ENCODE measurements at regions of chr7 and their contacts with region 1.

Region 1: GRCh38 chr7:27921081-27921836 is 181.3 kb downstream of the TAX1BP1 start:
- DNase-seq: peak; percentile 66 to 82
- H3K4me3 ChIP-seq: no peak overlapping the region
- H3K27ac ChIP-seq: 0 out of 2 replicates have a peak overlapping the region, but pooled peaks have one; percentile 1
- H3K4me1 ChIP-seq: peaks cover 33% of the 10 kb centered on the region
- H3K27me3 ChIP-seq: no peaks in the 10 kb centered on the region
- CTCF ChIP-seq: peak; percentile 91

Region 2: DNA sequence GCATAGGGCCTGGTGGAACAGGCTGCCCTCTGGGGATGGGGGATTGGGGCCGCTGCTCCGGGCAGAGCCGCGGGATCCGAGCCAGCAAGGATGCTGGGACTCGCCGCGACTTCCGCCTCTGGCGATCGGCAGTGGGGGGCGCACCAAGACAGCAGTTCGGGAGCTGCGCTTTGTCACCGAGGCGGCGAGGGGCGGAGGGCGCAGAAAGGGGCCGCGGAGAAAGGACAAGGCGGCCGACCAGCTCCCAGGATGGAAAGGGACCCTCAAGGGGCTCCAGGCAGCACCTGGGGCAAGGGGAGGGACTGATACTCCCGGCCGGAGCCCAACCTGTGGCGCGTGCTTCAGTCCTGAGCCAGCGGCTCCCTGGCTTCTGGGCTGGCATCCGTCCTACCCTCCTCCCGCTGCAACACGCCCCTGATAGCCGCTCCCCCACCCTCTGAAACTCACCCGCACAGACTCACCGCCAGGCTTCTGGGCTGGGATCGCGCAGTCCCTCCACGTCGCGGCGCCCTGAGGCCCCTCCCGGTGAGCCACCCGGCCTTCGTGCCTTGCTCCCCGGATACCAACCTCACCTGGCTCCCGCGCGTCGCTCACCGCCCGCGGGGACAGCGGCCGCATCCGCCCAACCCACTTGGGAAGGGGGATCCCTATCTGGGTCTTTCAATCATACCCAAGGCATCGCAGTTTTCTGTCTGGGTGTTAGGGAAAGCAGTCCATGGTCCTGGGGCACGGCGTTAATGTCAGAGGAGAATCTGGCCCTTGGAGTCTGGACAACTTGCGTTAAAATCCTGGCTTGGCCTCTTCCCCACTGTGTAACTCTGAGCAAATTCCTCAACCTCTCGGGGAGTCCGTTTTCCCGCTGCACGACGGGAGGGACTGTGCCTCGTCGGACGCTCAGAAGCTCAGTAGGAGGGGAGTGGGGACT is 685.6 kb before region 1 on chr7:
- CTCF ChIA-PET with region 1: no interaction called
- POLR2A ChIA-PET with region 1: no interaction called
- intact Hi-C with region 1: loop called (anchors 1 kb)
- DNase-seq: peak; percentile 44 to 74
- H3K4me3 ChIP-seq: peak overlapping the region; percentile 64
- H3K27ac ChIP-seq: no peak overlapping the region
- H3K4me1 ChIP-seq: no peaks in the 10 kb centered on the region
- H3K27me3 ChIP-seq: peaks cover 8% of the 10 kb centered on the region; the same call in 1 of the 2 replicates
- CTCF ChIP-seq: peak; percentile 75

Region 3: DNA sequence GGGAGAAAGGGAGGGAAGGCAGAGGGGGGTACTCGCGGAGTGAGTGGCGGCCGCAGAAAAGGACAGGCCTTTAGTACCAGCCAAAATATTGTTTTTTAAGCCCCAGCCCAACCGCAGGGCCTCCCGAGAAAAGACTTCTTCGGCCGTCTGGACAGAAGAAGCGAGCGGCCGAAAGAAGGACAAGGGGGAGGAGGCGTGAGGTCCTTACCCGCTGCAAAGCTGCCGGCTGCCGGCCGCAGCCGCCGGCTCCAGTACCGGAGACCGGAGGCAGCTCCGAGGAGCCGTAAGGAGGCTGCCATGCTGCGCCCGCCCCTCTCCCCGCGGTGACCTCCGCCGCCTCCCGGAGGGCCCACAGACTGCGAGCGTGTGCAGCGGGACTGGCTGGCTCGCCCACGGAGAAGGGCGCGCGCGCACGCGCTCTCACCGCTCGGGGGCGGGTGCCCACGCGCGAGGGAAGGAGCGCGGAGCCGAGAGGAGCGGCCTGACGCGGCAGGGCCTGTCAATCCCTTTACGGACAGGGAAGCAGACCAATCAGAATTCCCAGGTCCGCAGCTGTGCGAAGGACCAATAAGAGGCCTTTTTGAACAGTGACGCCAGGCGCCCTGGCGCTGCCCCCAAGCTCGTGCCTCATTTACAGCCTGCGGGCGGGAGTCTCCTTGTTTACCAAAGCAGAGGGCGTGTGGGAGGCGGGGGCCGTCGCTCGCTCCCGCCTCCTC is 258.6 kb before region 1 on chr7 and contains the start of gene HIBADH:
- CTCF ChIA-PET with region 1: interaction called, 3 read pairs
- POLR2A ChIA-PET with region 1: no interaction called
- intact Hi-C with region 1: loop called (anchors 10 kb)
- DNase-seq: peak; percentile 99
- H3K4me3 ChIP-seq: peak within 1 kb of the TSS; percentile 79
- H3K27ac ChIP-seq: peak within 1 kb of the TSS; percentile 64
- H3K4me1 ChIP-seq: peaks cover 22% of the 10 kb centered on the region
- H3K27me3 ChIP-seq: no peaks in the 10 kb centered on the region
- CTCF ChIP-seq: no peak; the same call in 1 of the 2 replicates
- total RNA-seq, gene HIBADH: 72.4 and 73.9 TPM in 2 replicates

Region 4: DNA sequence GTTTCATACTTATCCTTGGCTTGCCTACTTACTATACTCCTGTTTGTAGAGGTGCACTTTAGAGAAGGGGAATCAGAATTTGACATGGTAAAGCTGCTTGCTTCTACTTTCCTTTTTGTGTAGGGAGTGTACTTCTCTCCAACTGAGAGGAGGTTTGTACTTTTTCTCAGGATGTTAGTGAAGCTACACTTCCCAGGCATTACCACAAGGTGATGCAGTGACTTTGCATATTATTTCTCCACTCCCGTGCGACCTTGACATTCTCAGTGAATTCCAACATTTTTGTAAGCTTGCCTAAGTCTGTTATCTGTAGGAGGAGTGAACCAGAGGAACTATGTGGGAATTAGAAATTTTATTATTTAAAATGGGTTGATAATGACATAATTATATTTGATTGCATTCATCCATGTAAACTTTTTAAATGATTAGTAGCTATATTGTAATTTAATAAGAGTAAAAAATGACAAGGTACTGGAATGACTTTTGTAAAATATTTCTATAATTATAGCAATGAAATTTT is 176.1 kb before region 1 on chr7:
- CTCF ChIA-PET with region 1: interaction called, 6 read pairs
- POLR2A ChIA-PET with region 1: interaction called, 18 read pairs
- intact Hi-C with region 1: loop called (anchors 1 kb)
- DNase-seq: peak; percentile 47 to 82
- H3K4me3 ChIP-seq: peak overlapping the region; percentile 25
- H3K27ac ChIP-seq: peak overlapping the region; percentile 65
- H3K4me1 ChIP-seq: peaks cover 42% of the 10 kb centered on the region
- H3K27me3 ChIP-seq: no peaks in the 10 kb centered on the region
- CTCF ChIP-seq: peak; percentile 81

Region 5: DNA sequence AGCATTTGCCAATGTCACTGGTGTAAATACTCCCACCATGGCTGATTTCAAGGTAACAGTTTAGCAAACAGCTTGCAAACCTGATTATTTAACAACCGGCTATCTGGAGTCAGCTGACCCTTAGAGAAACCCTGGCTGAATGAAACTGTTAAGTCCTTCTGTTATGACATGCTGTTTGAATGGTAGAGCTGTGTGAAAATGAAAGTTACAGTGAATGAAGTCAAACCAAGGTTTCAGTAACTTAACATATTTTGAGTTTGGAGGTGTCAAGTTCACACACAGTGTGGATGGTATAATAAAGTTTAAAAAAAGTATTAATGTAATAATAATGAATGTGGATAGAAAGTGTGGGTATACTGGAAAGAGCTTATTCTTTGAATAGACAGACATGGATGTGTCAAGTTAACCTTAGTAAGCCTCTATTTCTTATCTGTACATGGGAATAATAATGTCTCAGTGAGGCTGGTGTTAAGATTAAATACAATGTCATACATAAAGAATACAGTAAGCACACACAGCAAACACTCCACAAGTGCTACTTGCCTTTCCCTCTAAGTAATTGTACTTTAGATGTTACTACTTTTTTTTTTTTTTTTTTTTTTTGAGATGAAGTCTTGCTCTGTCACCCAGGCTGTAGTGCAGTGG is 30.9 kb before region 1 on chr7:
- CTCF ChIA-PET with region 1: no interaction called
- POLR2A ChIA-PET with region 1: no interaction called
- intact Hi-C with region 1: loop called (anchors 2 kb)
- DNase-seq: peak in 1 of 2 experiments; percentile 12
- H3K4me3 ChIP-seq: peak overlapping the region; percentile 33; the same call in 1 of the 2 replicates
- H3K27ac ChIP-seq: peak overlapping the region; percentile 65
- H3K4me1 ChIP-seq: peaks cover 25% of the 10 kb centered on the region
- H3K27me3 ChIP-seq: no peaks in the 10 kb centered on the region
- CTCF ChIP-seq: no peak

Region 6: DNA sequence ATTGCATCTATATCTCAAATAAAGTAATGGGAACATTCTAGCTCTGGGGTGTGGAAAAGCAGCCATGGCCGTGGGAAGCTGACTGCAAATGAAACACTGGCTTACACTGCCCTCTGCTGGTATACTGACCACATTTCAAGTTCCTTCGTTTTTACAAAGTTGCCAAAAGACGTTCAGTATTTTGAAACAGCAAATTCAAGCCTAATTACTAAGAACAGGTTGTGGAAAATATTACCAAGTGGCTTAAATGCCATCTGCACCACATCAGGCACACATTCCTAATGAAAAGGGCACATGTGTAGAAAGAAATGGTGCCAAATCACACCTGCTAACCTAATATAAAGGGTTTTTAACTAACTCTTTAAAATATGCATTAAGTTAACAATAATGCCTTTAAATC is 175.5 kb after region 1 on chr7:
- CTCF ChIA-PET with region 1: interaction called, 4 read pairs
- POLR2A ChIA-PET with region 1: interaction called, 3 read pairs
- intact Hi-C with region 1: loop called (anchors 1 kb)
- DNase-seq: peak; percentile 52 to 64
- H3K4me3 ChIP-seq: no peak overlapping the region
- H3K27ac ChIP-seq: no peak overlapping the region
- H3K4me1 ChIP-seq: 0 out of 2 replicates have a peak, but pooled peaks cover 3% of the 10 kb centered on the region
- H3K27me3 ChIP-seq: no peaks in the 10 kb centered on the region
- CTCF ChIP-seq: peak; percentile 98